PC-9 (cell line): ENCODE measurements at regions of chr5 and their contacts with region 1.

Region 1: DNA sequence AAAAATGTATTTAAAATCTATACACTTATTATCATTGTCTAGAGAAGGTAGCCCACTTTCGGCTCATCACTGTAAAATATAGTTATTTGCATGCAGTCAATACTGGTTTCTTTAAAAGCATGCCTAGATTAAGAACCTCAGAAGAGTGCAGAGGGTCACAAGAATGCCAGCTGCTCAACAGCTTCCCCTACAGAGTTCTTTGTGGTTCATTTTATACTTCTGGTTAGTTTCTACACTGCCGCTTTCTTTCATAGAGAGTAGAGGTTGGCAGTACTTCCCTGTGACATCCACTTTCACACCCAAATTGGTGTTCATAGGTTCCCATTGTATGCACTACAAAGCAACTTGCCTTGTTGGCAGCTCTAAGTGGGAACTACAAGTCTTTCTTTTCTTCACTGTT is 137.3 kb downstream of the KIAA0825 start:
- DNase-seq: no peak
- H3K4me3 ChIP-seq: no peak overlapping the region
- H3K27ac ChIP-seq: no peak overlapping the region
- H3K4me1 ChIP-seq: no peaks in the 10 kb centered on the region
- H3K27me3 ChIP-seq: no peaks in the 10 kb centered on the region
- CTCF ChIP-seq: no peak

Region 2: DNA sequence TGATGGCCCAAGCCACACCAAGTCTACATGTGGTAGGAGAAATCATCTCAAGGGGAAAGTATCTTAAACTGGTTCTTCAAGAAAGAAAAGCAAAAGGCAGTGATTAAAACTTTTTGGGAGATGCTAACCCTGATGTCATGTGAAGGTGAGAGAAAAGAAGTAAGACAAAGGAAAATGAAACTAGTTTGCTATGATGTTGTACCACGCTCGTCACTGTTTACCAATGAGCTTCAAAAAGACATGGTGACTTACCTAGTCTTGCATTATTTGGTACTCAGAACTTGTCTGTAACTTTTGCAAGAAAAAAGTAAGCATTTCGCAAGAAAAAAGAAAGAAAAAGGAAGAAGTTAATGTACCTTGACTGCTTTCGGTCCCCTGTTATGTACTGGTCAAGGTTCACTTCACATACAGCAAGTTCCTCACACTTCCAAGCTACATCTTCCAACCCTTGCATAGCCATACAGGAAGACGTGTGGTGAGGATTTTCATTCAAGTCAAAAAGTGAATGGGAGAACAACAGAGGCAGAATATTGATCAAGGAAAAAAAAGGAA is 1639.4 kb before region 1 on chr5:
- CTCF ChIA-PET with region 1: no interaction called
- POLR2A ChIA-PET with region 1: no interaction called
- intact Hi-C with region 1: loop called (anchors 5 kb)
- DNase-seq: no peak
- H3K4me3 ChIP-seq: no peak overlapping the region
- H3K27ac ChIP-seq: no peak overlapping the region
- H3K4me1 ChIP-seq: no peaks in the 10 kb centered on the region
- H3K27me3 ChIP-seq: no peaks in the 10 kb centered on the region
- CTCF ChIP-seq: no peak

Region 3: GRCh38 chr5:94508461-94509148 is 27.5 kb after region 1 on chr5:
- CTCF ChIA-PET with region 1: no interaction called
- POLR2A ChIA-PET with region 1: interaction called, 11 read pairs
- intact Hi-C with region 1: no loop called
- DNase-seq: no peak
- H3K4me3 ChIP-seq: no peak overlapping the region
- H3K27ac ChIP-seq: no peak overlapping the region
- H3K4me1 ChIP-seq: no peaks in the 10 kb centered on the region
- H3K27me3 ChIP-seq: no peaks in the 10 kb centered on the region
- CTCF ChIP-seq: no peak

Region 4: DNA sequence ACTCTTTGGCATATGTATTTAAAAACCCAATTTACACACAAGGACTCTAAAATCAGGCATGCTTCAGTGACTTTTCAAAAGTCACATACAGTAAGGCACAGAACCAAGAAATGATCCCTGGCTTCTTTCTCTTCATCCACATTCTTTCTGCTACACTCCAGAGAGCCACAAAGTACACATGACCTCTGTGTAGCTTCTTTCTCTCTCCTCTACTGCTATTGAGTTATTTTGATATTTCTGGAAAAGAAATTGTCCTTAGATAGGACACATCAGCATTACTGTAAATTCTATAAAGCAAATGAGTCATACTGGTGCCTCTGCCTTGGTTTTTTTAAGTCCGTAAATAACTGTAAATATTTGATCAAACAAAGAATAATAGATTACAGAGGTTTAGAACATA is 41.0 kb after region 1 on chr5:
- CTCF ChIA-PET with region 1: no interaction called
- POLR2A ChIA-PET with region 1: no interaction called
- intact Hi-C with region 1: no loop called
- DNase-seq: no peak
- H3K4me3 ChIP-seq: no peak overlapping the region
- H3K27ac ChIP-seq: no peak overlapping the region
- H3K4me1 ChIP-seq: no peaks in the 10 kb centered on the region
- H3K27me3 ChIP-seq: no peaks in the 10 kb centered on the region
- CTCF ChIP-seq: no peak